ENCODE measurements at regions of chr20 and their contacts with region 1.

Region 1: GRCh38 chr20:63537525-63538203 is 488 bp upstream of the PTK6 start:
- DNase-seq: peak; percentile 78
- H3K4me3 ChIP-seq: peak overlapping the region; percentile 46 to 67 (median 62)
- H3K27ac ChIP-seq: peak overlapping the region; percentile 90 to 99 (median 95)
- H3K4me1 ChIP-seq: peaks cover 31 to 91% (median 43%) of the 10 kb centered on the region in 3 donors
- H3K27me3 ChIP-seq: peaks cover 0 to 80% (median 0%) of the 10 kb centered on the region in 4 donors
- CTCF ChIP-seq: peak; percentile 94 to 99 (median 98)
- POLR2A ChIP-seq: peak in 3 of 4 donors; percentile 61 to 78 (median 63)

Region 2: GRCh38 chr20:63739130-63740069 is 201.7 kb after region 1 on chr20 and contains the start of gene SLC2A4RG:
- intact Hi-C with region 1: loop called (anchors 5 kb)
- DNase-seq: no peak
- H3K4me3 ChIP-seq: peak within 1 kb of the TSS; percentile 51 to 90 (median 64)
- H3K27ac ChIP-seq: peak within 1 kb of the TSS; percentile 87 to 98 (median 94)
- H3K4me1 ChIP-seq: peaks cover 45 to 68% (median 46%) of the 10 kb centered on the region in 3 donors
- H3K27me3 ChIP-seq: no peaks in the 10 kb centered on the region
- CTCF ChIP-seq: no peak
- POLR2A ChIP-seq: no peak
- total RNA-seq, gene SLC2A4RG: 37.0 to 55.5 (median 50.2) TPM

Region 3: DNA sequence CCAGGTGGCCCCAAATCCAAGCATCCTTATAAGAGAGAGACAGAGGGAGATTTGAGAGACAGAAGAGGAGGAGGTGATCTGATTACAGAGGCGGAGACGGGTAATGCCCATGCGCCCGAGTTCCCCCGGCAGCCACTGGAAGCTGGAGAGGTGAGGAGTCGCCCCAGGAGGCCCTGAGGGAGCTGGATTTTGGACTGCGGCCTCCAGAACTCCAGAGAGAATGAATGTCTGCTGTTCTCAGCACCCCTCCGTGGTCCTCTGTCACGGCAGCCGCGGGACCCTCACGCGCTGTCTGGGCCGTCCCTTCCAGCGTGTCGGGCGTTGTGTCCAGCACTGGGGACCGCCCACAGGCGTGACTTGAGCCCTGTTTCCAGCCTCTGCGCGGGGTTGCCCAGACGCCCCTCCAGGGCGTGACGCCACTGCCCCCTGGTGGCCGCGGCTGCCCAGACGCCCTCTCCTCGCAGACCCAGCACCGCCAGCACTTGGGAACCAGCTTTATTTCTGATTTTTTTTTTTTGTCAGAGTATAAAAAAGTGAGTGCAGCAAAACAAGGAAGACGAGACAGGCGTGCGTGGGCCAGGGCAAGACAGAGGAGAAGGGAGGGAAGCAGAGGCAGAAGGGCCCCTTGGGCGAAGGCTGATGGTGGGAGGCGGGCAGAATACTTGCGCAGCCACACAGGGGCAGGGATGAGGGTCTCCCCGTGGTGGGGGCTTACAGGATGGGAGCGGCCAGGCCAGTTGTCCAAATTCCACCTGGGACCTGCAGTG is 436.2 kb after region 1 on chr20:
- intact Hi-C with region 1: loop called (anchors 5 kb)
- DNase-seq: no peak
- H3K4me3 ChIP-seq: peak overlapping the region in 3 of 4 donors; percentile 31 to 63 (median 35)
- H3K27ac ChIP-seq: peak overlapping the region in 3 of 4 donors; percentile 49 to 78 (median 64)
- H3K4me1 ChIP-seq: peaks cover 25 to 46% (median 29%) of the 10 kb centered on the region in 3 donors
- H3K27me3 ChIP-seq: no peaks in the 10 kb centered on the region
- CTCF ChIP-seq: peak; percentile 93 to 100 (median 96)
- POLR2A ChIP-seq: no peak

Measured in esophagus squamous epithelium (tissue), 5 donors.